ENCODE measurements at regions of chr5 and their contacts with region 1.

Region 1: DNA sequence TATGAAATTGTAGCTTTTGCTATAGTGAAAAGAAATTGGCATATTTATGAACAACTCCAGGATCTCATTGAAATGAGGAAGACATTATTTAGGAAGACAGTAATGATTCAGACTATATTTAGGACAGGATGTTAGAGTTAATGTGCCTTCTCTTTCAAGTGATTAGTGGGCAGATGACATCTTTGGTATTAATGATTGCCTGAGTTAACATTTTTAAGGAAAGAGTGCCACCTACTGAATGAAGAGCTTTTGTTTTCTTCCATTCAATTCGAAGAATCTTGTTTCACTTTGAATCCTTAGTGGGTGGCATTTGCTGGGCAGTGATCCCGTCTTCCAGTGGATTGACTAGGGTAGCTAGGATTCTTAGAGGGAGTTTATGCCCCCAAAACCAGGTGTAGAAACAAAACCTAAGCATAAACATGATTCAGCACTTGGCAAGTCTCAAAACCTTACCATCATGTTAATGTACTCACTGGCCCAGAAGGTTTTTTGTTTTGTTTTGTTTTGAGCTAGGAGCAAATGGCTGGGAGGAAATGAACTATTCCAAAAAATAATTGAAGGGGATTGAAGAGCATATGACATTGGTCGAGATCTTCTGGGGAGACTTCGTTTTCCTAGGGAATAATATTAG is 23.2 kb downstream of the MAP3K1 start:
- DNase-seq: peak in 1 of 2 experiments; percentile 39
- H3K4me3 ChIP-seq: no peak overlapping the region
- H3K4me3 Mint-ChIP-seq: no peak overlapping the region
- H3K27ac Mint-ChIP-seq: peak overlapping the region; percentile 22
- H3K4me1 ChIP-seq: peaks cover 43% of the 10 kb centered on the region
- H3K4me1 Mint-ChIP-seq: peaks cover 45% of the 10 kb centered on the region
- H3K27me3 ChIP-seq: no peaks in the 10 kb centered on the region
- H3K27me3 Mint-ChIP-seq: no peaks in the 10 kb centered on the region
- CTCF ChIP-seq: peak; percentile 36 to 53

Region 2: DNA sequence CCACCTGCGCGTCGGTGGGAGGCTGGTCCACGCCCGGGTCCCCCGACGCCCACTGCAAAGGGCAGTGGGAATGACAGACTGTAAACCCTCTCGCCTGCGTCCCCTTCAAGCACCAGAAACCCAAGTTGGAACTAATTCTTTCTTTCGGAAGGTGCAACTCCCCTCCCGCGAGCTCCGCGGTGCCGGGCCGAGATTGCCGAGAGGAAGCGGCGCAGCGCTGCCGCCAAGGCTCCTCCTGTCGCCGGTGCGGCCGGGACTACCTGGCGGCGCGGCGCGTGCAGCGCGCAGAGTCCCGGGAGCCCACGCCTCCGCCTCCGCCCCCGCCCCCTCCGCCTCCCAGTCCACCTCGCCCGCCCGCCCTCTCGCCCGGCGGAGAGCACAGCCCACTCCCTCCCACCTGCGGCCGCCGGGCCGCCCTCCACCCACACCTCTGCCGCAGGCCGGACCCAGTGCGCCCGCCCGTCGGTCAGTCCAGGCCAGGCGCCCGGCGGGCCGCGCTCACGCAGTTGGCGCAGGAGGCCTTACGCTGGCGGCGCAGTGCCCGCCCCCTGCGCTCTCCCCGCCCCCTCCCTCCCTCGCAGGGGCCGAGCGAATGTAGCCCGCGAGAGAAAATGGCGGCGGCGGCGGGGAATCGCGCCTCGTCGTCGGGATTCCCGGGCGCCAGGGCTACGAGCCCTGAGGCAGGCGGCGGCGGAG is 23.4 kb before region 1 on chr5 and contains the start of gene MAP3K1:
- CTCF ChIA-PET with region 1: interaction called, 3 read pairs
- POLR2A ChIA-PET with region 1: no interaction called
- intact Hi-C with region 1: loop called (anchors 1 kb)
- DNase-seq: peak; percentile 95 to 96
- H3K4me3 ChIP-seq: peak within 1 kb of the TSS; percentile 92
- H3K4me3 Mint-ChIP-seq: peak within 1 kb of the TSS; percentile 97
- H3K27ac Mint-ChIP-seq: peak within 1 kb of the TSS; percentile 93
- H3K4me1 ChIP-seq: peaks cover 42% of the 10 kb centered on the region
- H3K4me1 Mint-ChIP-seq: peaks cover 20% of the 10 kb centered on the region
- H3K27me3 ChIP-seq: no peaks in the 10 kb centered on the region
- H3K27me3 Mint-ChIP-seq: no peaks in the 10 kb centered on the region
- CTCF ChIP-seq: no peak
- total RNA-seq, gene MAP3K1: 46.0 and 47.0 TPM in 2 replicates

Region 3: GRCh38 chr5:56876327-56876726 is 37.8 kb after region 1 on chr5:
- CTCF ChIA-PET with region 1: no interaction called
- POLR2A ChIA-PET with region 1: no interaction called
- intact Hi-C with region 1: no loop called
- DNase-seq: no peak
- H3K4me3 ChIP-seq: no peak overlapping the region
- H3K4me3 Mint-ChIP-seq: no peak overlapping the region
- H3K27ac Mint-ChIP-seq: no peak overlapping the region
- H3K4me1 ChIP-seq: no peaks in the 10 kb centered on the region
- H3K4me1 Mint-ChIP-seq: peaks cover 5% of the 10 kb centered on the region
- H3K27me3 ChIP-seq: no peaks in the 10 kb centered on the region
- H3K27me3 Mint-ChIP-seq: no peaks in the 10 kb centered on the region
- CTCF ChIP-seq: no peak

Measured in Caco-2 (cell line).